ENCODE measurements at regions of chr4 and their contacts with region 1.

Region 1: DNA sequence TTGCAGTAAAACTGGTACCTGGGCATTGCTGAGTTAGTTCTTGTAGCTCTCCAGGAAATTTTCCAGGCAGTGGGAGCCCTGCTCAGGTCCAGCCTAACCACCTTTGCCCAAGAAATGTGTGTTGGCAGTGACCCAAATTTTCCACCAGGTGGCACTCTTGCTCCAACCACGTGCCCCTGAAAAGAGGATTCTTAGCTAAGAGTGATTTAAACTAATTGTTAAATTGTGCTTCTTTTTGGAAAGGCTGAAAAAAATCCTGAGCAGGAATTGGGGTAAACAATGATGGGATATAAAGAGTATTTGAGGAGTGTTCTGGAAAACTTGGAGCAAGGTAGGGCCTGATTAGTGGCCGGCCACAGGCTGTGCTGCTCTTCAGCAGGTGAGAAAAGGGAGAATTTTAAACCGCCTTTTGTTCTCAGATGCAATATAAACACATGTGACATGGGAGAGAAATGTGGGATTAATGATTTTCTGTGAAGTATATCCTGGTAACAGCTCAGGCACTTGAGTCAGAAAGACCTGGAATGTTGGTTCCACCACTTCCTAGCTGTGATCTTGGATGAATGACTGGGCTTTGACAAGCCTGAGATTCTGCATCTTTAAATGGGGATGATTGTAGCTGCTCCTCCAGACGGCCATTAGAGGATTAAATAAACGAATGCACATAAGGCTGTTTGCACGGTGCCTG is 219.6 kb downstream of the PTTG2 start:
- DNase-seq: peak; percentile 80 to 93
- H3K4me3 ChIP-seq: no peak overlapping the region
- CTCF ChIP-seq: peak in 1 of 3 donors; percentile 43
- POLR2A ChIP-seq: no peak

Region 2: DNA sequence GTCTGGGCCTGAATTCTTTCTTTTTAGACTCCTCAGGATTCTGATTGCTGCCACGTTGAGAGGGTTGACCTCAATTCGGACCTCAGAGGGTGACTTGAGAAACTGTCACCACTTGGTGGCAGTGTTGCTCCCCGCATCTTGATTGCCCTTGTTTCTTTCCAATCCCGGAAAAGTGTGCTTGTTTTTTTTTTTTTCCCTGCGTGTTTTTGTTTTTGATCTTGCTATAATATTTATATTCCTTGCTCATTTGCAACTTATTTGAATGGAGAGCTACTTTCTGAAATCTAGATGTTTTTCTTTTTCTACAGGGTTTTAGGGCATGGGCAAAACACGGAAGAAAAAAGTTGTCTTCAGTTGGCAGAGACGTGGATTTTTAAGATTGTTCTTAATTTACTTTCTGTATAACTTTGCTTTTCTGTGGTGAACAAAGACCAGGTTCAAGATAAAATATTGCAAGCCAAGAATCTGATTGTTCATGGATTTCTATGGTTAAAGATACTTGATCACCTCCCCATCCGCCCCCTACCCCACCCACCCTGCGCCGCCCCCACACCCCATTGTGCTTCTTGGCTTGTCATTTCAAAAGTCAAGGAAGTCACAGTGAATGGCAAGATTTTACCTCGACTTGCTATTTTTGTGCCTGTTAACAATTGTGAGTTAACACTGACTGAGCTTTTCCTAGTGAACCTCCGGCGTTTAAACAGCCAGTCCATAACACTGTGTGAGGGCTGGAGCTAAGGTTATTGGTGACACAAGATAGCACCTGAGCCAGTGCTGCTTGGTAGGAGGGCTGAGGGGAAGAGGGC is 117.5 kb before region 1 on chr4:
- intact Hi-C with region 1: loop called (anchors 10 kb)
- DNase-seq: peak; percentile 83 to 96
- H3K4me3 ChIP-seq: no peak overlapping the region
- CTCF ChIP-seq: peak in 1 of 3 donors; percentile 26
- POLR2A ChIP-seq: no peak

Region 3: DNA sequence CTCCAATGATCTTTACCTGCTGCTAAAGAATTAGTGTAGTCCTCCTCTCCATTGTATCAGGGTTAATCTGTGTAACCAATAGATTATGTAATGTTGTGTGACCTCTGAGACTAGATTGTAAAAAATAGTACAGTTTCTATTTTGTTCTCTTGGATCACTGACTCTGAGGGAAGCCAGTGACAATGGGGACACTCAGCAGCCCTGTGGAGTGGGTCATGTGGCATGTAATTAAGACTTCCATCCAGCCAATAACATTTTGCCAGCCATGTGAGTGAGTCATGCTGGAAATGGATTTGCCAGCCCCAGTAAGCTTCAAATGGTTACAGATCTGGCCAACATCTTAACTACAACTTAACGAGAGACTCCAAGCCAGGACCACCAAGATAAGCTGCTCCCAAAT is 112.7 kb after region 1 on chr4:
- intact Hi-C with region 1: no loop called
- DNase-seq: no peak
- H3K4me3 ChIP-seq: no peak overlapping the region
- CTCF ChIP-seq: no peak
- POLR2A ChIP-seq: no peak

Measured in lower leg skin (tissue), 4 donors.